Ovary (tissue), 10 donors: ENCODE measurements at regions of chr7 and their contacts with region 1.

Region 1: DNA sequence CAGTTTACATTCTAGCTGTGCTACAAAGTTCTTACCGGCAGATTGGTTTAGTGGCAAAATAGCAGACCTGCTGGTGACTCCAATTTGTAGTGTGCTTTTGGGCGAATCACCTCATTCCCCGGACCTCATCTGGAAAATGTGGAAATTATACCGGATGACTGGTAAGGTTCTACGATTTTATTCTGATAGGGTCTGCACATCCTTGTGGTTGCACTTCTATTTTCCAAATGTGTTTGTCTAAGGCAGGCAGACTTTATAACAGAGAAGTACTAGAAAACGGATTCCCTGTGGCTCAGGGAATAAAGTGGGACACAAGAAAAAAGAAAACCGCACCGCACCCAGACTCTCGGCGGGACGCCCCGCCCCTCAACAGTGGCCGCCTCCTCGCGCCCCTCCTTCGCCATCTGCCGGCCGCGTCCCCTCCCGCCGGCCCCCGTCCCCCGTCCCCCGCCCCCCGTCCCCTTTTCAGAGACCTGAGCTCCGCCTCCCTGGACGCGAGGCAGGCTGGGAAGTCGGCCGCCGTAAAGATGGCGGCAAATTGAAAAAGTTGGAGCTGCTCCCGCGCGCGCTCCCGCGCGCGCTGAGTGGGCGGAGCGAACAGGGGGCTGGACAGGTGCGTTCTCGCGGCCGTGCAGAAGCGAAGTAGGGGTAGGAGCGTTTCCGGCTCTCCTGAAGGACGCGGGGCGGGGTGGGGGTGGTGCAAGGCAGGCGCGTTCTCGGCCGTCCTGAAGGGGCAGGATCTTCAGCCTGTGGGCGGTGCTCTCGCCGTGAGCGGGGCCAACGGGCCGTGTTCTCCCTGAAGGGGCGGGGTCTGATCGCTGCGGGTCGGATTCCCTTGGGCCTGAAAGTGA is 531 bp upstream of the CCM2 start:
- DNase-seq: peak; percentile 99 to 100 (median 100)
- H3K4me3 ChIP-seq: peak overlapping the region; percentile 41
- H3K27ac ChIP-seq: peak overlapping the region in 1 of 2 donors; percentile 58
- H3K4me1 ChIP-seq: peaks cover 3% of the 10 kb centered on the region
- H3K27me3 ChIP-seq: no peaks in the 10 kb centered on the region
- CTCF ChIP-seq: no peak
- EP300 ChIP-seq: no peak
- POLR2A ChIP-seq: no peak

Region 2: DNA sequence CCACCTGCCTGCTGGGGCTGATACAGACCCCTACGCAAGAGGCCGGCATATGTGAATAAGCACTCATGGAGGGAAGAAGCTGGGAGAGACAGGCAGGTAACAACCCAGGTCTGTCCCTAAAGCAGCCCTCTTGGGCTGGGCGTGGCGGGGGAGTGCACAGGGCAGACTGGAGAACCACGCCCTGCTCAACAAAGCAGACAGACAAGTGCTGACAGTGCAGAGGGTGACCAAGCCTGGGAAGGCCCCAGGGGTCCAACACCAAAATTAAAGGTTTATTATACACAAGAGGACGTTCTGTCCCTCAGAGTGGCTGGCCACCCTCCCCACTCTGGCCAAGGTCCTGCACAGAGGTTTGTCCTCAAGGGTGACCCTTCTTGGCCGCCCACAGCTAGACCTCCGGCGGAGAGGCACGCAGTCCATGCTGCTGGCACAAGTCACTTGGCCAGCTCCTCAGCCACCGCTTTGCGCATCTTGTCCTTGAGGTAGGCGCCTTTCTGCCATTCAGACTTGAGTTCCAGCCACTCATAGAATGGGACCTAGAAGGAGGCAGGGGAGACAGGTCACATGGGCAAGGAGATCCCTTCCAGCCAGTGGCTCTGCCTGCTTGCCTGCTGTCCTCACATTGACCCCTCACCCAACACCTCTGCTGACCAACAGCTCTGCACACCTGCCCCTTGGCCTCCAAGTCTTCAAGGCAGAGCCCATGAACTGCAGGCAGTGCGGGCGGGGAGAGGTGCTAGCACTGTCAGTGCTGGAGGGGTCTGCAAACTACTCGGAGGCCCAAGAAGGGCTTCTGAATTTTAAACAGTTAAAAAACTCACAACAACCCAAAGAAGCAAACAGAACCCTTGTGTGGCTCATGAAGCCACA is 100.7 kb after region 1 on chr7:
- intact Hi-C with region 1: loop called in 1 of 4 experiments (anchors 10 kb)
- DNase-seq: no peak
- H3K4me3 ChIP-seq: no peak overlapping the region
- H3K27ac ChIP-seq: no peak overlapping the region
- H3K4me1 ChIP-seq: no peaks in the 10 kb centered on the region
- H3K27me3 ChIP-seq: no peaks in the 10 kb centered on the region
- CTCF ChIP-seq: no peak
- EP300 ChIP-seq: no peak
- POLR2A ChIP-seq: no peak

Region 3: GRCh38 chr7:45278763-45279398 is 279.4 kb after region 1 on chr7:
- intact Hi-C with region 1: no loop called
- DNase-seq: no peak
- H3K4me3 ChIP-seq: no peak overlapping the region
- H3K27ac ChIP-seq: no peak overlapping the region
- H3K4me1 ChIP-seq: no peaks in the 10 kb centered on the region
- H3K27me3 ChIP-seq: no peaks in the 10 kb centered on the region
- CTCF ChIP-seq: no peak
- EP300 ChIP-seq: no peak
- POLR2A ChIP-seq: no peak